ENCODE measurements at regions of chr3 and their contacts with region 1.

Region 1: GRCh38 chr3:184417619-184418327 is 37.9 kb downstream of the CHRD start:
- DNase-seq: peak; percentile 19 to 84
- H3K4me3 ChIP-seq: no peak overlapping the region
- H3K27ac ChIP-seq: no peak overlapping the region
- H3K4me1 ChIP-seq: peaks cover 0 to 5% (median 4%) of the 10 kb centered on the region in 4 experiments; a peak in 2 of 7 replicates
- H3K27me3 ChIP-seq: no peaks in the 10 kb centered on the region
- CTCF ChIP-seq: peak; percentile 93 to 97 (median 96)
- EP300 ChIP-seq: no peak
- POLR2A ChIP-seq: no peak
- RAD21 ChIP-seq: peak; percentile 89 to 90

Region 2: DNA sequence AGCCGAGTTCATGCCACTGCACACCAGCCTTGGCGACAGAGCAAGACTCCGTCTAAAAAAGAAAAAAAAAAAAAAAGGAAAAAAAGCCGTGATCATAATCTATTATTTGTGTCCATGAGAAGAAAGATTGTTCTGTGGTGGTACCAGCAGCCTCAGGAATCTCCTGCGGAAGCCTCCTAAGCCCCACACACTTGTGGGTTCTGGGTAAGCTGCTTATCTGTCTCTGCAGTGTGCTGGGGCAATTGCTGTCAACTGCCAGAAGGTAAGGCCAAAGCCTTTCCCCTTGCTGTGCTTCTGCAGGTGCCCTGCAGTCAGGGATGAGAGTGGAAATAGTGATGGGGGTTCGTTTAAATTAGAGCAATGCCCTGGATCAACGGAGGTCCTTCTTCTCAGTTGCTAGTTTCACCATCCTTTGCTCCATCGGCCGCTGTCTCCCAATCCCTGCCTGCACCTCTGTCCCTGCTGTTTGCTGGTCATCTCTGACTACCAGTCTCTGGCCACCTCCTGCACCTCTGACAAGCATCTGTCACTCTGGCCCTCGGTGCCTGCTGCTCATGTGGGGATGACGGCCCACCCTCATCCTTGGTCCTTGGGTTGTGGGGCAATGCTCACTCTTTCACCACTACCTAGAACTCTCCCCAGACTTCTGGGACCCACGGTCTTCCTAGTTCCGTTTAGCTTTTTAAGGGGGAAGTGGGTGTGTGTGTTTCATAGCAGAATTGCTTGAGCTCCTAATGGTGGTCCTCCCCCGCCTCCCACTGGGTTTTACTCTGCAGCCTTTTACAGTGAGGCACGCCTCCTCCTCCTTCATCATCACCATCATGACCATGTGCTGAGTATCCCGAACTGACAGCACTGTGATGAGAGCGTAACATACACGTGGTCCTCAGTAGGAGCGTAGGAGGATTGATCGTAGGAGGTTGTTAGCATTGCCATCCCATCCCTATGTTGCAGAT is 12.4 kb before region 1 on chr3:
- CTCF ChIA-PET with region 1: interaction called, 10 read pairs
- POLR2A ChIA-PET with region 1: no interaction called
- DNase-seq: no peak
- H3K4me3 ChIP-seq: no peak overlapping the region
- H3K27ac ChIP-seq: no peak overlapping the region
- H3K4me1 ChIP-seq: no peaks in the 10 kb centered on the region
- H3K27me3 ChIP-seq: peaks cover 0 to 2% (median 0%) of the 10 kb centered on the region in 4 experiments; a peak in 1 of 7 replicates
- CTCF ChIP-seq: no peak
- EP300 ChIP-seq: no peak
- POLR2A ChIP-seq: no peak
- RAD21 ChIP-seq: no peak

Region 3: DNA sequence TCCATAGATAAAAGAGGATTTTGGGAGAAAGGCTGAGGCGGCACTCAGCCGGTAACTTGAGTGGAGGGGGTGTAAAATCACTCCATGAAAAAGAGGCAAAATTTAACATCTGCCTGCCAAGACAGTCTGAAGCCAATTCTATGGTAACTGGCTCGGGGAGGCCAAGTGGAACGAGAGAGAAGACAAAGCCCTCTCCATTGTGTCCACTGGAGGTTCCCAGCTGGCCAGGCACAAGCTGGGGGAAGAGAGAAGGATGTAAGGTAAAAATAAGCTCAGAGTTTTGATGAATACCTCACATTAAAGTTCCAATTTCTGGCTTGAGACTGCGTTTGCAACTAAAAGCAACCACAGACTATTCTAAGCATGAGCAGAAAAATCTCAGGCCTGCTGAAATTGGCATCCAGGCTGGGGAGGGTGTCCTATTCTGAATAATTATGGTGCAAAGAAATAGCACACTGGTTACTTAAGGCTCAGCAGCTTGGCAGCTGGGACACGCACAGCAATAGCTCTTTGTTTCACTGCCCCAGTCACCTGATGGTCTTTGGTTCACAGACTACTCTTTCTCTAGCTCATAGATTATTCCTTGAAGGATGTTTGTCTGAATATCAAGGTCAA is 10.9 kb after region 1 on chr3:
- CTCF ChIA-PET with region 1: interaction called, 22 read pairs
- POLR2A ChIA-PET with region 1: no interaction called
- DNase-seq: no peak
- H3K4me3 ChIP-seq: no peak overlapping the region
- H3K27ac ChIP-seq: no peak overlapping the region
- H3K4me1 ChIP-seq: no peaks in the 10 kb centered on the region
- H3K27me3 ChIP-seq: no peaks in the 10 kb centered on the region
- CTCF ChIP-seq: no peak
- EP300 ChIP-seq: no peak
- POLR2A ChIP-seq: no peak
- RAD21 ChIP-seq: no peak

Region 4: DNA sequence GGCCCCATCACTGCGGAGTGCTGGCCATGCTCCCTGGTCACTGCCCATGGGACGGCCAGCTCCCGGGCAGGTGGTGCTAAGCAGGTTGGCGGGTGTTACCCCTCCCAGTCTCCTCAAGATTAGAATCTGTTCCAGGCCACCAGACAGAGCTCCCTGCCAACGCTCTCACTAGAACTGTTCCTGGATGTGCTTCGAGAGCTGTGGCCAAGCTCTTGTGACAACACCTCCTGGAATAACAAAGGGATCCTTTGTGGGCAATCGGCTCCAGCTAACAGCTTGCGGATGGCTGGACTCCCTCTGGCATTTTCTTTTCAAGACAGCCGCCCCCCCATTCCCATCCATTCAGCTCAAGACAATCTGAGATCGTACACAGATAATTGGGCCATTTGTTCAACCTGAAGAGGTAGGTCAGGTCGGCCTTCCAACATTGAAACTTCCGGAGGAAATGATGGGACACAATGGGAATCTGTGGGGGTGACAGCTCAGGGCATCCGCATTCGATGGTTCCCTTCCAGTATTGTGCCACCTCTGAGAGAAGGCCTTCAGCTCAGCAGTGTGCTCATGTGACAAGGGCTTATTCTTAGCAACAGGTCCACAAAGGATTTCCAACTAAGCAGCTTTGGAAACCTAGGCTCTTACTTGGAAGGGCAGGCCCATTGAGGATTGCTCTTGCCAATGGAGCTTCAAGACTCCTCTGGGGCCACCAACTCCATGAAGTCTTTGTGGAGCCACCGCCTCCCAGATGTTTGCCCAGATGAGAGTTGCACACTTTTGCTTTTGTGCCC is 132.2 kb after region 1 on chr3:
- CTCF ChIA-PET with region 1: interaction called, 83 read pairs
- POLR2A ChIA-PET with region 1: no interaction called
- DNase-seq: no peak
- H3K4me3 ChIP-seq: no peak overlapping the region
- H3K27ac ChIP-seq: no peak overlapping the region
- H3K4me1 ChIP-seq: no peaks in the 10 kb centered on the region
- H3K27me3 ChIP-seq: no peaks in the 10 kb centered on the region; a peak in 1 of 7 replicates
- CTCF ChIP-seq: no peak
- EP300 ChIP-seq: no peak
- POLR2A ChIP-seq: no peak
- RAD21 ChIP-seq: no peak